GM13976 (cell line): ENCODE measurements at regions of chr2 and their contacts with region 1.

Region 1: DNA sequence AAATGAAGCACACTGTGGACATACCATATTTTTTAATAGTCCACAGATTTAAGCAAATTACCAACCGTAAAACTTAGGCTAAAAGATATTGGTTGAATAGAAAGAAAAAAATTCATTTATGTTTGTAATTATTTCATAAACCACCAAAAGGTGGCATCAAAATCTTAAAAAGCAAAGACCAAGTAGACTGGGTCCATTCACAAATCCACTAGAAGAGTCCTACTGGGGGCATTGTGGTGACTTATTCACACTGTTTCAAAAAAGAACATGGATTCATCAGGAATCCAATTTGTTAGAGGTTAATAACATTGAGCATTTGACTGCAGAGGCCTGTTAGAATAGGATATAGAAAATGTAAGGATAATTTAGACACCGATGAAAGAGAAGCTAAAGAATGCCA is 194.9 kb upstream of the KYNU start:
- DNase-seq: peak; percentile 18
- CTCF ChIP-seq: no peak

Region 2: DNA sequence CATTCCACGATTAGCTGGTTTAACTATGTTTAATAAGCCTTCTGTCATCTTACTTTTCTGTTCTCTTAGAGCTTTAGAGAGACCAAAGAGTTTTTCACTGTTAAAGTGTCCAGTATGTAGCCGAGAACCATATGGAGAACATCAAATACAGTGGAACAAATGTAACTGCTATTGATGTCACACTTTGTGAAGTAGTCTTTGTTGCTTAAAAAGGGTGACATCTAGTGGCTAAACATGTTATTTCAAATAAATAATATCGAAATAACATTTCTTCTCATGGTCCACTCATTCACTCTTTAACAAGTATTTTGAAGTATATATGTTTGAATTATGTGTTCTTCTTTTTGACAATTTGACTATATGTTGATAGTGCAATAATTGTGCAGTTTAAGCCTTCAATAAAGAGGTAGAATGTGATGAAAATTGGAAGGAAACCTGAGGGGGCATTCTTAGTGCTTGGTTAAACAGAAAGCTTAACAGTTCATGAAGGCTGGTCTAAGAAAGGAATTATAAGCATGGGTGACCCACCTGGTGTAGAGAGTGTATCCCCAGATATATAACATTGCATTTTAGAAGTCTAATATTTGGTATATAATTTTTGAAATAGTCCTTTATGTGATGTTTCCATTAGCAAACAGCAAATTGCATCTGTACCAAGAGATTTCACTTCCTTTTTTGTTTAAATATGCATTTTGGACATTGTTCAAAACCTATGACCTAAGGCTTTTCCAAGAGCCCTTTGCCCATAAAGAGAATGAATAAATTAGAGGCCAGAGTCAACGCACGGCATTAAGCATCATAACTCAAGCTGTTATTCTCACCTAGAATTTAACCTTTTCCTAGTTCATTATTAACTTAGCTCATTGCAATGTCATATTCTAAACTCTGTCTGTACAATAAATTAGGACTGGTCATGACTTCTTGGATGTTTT is 307.0 kb after region 1 on chr2:
- in situ Hi-C with region 1: loop called (anchors 25 kb)
- DNase-seq: no peak
- CTCF ChIP-seq: peak; percentile 13

Region 3: DNA sequence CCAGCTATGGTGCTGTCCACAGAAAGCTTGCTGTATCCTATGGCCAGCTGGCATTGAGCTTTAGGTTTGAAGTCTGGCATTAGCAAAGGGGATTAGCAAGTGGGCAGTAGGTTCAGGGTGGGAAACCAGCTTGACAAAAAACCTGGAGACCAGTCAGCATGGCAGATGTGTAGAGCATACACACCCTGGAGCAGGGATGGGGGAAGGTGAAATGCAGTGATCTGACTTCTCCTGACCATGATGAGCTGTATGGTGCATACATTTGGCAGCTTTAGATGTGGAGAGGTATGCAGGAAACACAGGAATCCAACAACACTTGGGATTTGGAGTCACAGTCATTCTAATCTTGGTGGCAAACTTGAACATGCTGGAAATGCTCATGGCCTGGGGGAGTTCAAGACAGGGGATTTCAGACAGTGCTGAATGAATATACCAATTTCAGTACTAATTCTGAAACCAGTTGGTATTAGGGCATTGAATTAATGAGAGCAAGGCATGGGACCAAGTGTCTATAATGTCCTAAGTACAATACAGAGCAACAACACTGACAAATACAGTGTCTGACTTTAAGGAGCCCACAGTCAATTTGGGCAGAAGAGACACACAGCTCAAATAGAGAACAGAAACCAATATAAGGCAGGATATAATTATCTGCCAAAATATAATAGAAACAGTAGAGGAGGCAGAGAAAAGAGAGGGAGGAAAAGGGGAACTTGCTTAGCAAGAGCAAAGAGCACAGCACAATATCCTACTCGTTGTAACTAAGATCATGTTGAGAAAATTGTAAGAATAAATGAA is 458.5 kb after region 1 on chr2:
- in situ Hi-C with region 1: no loop called
- DNase-seq: no peak
- CTCF ChIP-seq: no peak